OCI-LY7 (cell line): ENCODE measurements at regions of chr4 and their contacts with region 1.

Region 1: DNA sequence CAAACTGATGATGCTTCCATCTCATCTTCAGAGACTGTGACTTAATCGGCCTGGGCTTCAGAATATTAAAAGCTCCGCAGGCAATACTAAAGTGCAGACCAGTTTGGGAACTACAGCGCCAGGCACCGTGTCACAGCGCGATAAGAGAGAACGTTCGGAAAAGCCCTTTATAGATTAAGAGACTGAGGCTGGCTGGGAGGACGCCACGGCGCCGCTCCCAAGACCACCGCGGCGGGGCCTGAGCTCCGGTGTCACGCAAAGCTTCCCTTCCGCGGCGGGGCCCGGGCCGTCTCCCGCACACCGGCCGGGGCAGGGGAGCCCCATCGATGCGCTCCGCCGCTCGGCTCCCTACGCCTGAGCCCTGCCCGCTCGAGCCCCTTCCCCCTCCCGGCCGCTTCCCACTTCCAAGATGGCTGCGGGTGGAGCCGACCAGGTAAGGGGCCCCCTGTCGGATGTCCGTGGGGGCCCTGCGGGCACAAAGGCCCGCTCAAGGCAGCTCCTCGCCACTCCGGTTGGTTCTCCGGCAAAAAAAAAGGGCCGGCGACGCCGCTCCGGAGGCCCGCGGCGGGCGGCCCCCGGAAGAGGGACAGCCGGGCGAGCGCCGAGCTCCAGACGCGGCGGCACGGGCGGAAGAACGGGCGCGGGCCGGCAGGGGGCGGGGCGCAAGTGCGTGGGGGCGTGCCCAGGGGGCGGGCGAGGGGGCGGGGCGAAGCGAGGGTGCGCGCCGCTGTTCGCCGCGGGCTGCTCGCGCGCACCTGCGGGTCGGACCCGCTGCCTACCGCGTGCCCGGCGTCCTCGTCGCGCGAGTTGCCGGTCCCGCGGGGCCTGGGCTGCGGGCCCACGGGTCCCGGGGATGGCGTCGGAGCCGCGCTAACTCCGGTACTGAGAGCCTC is at the start of gene TBC1D14:
- DNase-seq: peak; percentile 89
- H3K4me3 ChIP-seq: peak within 1 kb of the TSS; percentile 73
- H3K27ac ChIP-seq: peak within 1 kb of the TSS; percentile 77
- H3K4me1 ChIP-seq: peaks cover 39% of the 10 kb centered on the region
- CTCF ChIP-seq: peak; percentile 37; the same call in 1 of the 2 replicates
- total RNA-seq, gene TBC1D14: 35.6 and 38.4 TPM in 2 replicates

Region 2: DNA sequence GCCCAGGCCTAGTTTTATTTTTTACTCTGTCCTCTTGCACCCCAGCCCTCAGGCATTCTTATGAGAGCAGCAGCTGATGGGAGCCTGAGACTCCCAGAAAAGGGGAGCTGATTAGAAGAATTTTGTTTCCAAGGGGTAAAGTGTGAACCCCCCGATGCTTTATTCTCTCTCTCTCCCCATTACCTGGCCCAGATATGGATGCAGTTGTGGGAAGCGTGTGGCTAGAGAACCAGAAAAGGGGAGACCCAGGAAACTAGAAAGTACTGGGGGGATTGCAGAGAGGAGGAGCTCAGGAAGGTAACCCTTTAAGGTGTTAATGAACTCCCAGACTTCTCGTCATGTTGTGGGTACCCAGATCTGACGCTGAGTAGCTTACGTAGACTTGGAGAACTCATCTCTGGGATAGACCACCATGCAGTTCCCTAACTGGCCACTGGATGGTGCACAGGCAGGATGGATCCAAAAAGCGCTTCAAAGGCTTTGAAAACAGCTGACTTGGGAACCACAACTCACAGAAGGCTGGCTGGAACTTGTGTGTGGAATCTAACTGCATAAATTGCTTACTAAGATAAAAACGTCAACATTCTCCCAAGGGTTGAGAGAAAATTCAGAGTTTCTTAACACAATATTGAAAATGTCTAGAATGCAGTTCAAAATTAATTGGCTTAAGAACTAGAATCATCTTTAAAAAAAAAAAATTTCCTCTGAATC is 65.0 kb after region 1 on chr4:
- CTCF ChIA-PET with region 1: interaction called, 3 read pairs
- POLR2A ChIA-PET with region 1: interaction called, 6 read pairs
- intact Hi-C with region 1: loop called (anchors 5 kb)
- DNase-seq: peak; percentile 83
- H3K4me3 ChIP-seq: no peak overlapping the region
- H3K27ac ChIP-seq: no peak overlapping the region
- H3K4me1 ChIP-seq: peaks cover 38% of the 10 kb centered on the region
- CTCF ChIP-seq: peak; percentile 93